Head of caudate nucleus (tissue), 42 donors: ENCODE measurements at regions of chr20 and their contacts with region 1.

Region 1: DNA sequence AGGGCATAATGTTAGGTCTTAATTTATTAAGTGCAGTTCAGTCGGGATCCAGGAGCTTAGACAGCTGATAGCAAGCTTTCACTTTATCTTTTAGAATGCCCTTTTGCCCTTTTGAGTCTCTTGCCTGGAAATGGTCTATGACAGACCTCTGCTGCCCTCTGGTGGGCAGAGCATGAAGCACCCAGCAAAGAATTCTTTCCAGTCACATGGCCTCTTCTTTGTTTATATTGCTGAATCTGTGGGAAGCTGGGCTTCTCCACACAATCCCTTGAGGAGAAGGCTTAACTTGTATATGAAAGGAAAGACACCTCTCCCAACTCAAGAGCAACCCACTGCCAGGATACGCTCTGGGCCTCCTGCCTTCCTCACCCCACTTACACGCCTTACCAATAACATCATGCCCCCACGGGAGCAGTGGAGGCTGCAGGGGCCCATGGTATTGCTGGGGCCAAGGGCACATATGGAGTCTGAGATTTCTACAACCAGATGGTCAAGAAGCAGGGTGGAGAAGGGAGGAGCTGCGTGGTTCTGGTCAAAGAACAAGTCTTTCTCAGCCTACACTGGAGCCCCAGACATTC is 20.4 kb downstream of the WFDC3 start:
- DNase-seq: peak; percentile 29 to 94 (median 84)

Region 2: GRCh38 chr20:45322952-45323383 is 448.3 kb before region 1 on chr20:
- intact Hi-C with region 1: loop called (anchors 5 kb)
- DNase-seq: peak in 39 of 42 donors; percentile 36 to 81 (median 66)

Region 3: DNA sequence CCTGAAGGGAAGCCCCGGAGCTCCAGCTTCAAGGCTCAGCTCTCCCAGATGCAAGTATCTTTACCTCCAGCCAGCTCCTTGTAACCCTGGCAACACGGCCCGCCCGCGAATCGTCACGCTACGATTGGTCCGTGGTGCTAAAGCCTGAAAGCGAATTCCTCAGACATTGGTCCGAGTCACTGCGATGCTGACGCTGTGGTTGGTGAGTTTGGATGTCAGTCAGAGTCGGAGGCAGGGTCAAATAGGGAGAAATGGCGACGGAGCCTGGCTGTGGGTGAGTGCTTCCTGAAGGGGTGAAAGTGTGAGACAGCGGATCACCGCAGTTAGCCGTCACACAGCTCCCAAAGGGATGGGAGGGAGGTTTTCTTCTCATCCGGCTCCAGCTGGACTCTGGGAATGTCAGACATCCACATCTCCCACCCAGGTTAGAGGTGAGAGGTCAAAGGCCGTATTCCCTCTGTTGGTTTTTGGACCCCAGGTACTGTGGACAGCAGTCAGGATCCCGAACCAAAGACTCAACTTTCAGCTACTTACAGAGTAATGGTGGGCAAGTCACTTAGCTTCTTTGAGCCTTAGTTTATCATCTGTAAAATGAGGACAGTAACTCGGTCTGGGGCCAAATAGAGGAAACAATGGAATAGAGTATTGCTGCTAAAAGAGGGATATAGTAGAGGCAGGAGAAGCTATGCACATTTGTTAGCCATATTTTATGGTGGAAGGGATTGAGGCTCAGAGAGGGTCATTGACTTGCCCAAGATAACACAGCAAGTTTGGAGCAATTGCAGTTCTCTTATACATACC is 109.9 kb after region 1 on chr20 and contains the start of gene ZSWIM1:
- intact Hi-C with region 1: no loop called
- DNase-seq: peak; percentile 98 to 100 (median 100)

Region 4: DNA sequence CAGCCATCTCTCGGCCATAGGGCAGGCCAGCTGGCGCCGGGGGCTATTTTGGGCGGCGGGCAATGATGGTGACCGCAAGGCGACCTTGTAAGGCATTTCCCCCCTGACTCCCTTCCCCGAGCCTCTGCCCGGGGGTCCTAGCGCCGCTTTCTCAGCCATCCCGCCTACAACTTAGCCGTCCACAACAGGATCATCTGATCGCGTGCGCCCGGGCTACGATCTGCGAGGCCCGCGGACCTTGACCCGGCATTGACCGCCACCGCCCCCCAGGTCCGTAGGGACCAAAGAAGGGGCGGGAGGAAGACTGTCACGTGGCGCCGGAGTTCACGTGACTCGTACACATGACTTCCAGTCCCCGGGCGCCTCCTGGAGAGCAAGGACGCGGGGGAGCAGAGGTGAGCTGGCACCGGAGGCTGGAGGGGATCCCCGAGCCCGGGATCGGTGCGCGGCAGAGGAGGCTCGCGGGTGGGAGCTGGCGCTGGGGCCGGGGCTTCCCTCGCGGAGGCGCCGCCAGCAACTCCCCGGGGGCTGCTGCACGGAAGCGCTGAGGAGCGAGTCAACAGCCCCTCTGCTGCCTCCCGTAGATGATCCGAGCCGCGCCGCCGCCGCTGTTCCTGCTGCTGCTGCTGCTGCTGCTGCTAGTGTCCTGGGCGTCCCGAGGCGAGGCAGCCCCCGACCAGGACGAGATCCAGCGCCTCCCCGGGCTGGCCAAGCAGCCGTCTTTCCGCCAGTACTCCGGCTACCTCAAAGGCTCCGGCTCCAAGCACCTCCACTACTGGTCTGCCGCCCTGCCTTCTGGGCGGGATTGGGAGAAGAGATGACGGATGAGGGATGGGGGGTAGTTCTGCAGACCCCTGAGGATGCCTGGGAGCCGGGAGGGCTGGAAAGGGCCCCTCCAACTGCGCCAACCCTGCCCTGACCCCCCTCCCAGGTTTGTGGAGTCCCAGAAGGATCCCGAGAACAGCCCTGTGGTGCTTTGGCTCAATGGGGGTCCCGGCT is 120.0 kb after region 1 on chr20 and contains the starts of genes CTSA and NEURL2:
- intact Hi-C with region 1: no loop called
- DNase-seq: peak; percentile 89 to 98 (median 95)